Sciatic nerve (tissue), 2 donors: ENCODE measurements at regions of chr12 and their contacts with region 1.

Region 1: GRCh38 chr12:53984901-53985709 is at the start of gene HOXC10:
- DNase-seq: peak; percentile 98
- ATAC-seq: peak; percentile 91
- total RNA-seq, gene HOXC10: 17.2 TPM

Region 2: DNA sequence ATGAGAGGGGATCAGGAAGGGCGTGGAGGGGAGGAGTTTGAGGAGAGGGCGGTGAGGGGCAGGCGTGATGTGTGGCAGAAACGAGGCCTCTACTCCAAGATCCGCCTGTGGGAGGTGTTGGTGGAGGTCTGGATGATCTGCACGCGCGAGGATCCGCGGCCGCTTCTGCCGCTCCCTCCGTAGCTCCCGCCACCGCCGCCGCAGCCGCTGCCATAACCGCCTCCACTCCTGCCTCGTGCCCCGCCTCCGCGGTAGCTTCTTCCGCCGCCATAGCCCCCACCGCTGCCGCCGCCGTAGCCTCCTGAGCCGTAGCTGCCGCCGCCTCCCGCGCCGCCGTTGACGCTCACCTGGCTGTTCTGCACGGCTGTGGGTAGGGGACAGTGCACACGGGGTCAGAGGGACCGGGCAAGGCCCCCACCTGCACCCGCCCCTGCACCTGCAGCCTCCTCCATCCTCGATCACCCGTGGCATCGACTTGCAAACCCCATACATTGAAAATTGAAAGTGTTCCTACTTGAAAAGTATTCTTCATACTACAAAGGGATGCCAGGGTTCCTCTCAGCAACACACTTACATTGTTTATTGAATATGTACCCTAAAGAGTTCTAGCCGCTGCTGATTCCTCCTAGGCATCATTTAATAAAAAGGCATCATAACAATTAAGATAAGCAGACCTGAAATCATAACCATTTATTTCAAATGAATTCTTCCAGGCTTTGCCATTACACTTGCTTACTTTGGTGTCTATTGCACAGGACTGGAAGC is 1293.8 kb before region 1 on chr12:
- intact Hi-C with region 1: no loop called
- DNase-seq: no peak
- ATAC-seq: peak; percentile 10

Region 3: GRCh38 chr12:53251477-53252348 is 733.4 kb before region 1 on chr12:
- intact Hi-C with region 1: loop called (anchors 5 kb)
- DNase-seq: peak; percentile 88
- ATAC-seq: peak; percentile 92

Region 4: GRCh38 chr12:54207484-54208294 is 222.6 kb after region 1 on chr12:
- intact Hi-C with region 1: loop called (anchors 5 kb)
- DNase-seq: peak; percentile 90
- ATAC-seq: peak; percentile 74